WTC11 (cell line): ENCODE measurements at regions of chr11 and their contacts with region 1.

Region 1: GRCh38 chr11:114892381-114893197 is 214.3 kb downstream of the NXPE2 start:
- DNase-seq: peak; percentile 61
- ATAC-seq: peak; percentile 51
- H3K4me3 Mint-ChIP-seq: no peak overlapping the region
- H3K27ac Mint-ChIP-seq: no peak overlapping the region
- H3K4me1 Mint-ChIP-seq: peaks cover 23% of the 10 kb centered on the region
- H3K27me3 Mint-ChIP-seq: peaks cover 3% of the 10 kb centered on the region; the same call in 1 of the 2 replicates
- CTCF ChIP-seq: peak; percentile 84

Region 2: DNA sequence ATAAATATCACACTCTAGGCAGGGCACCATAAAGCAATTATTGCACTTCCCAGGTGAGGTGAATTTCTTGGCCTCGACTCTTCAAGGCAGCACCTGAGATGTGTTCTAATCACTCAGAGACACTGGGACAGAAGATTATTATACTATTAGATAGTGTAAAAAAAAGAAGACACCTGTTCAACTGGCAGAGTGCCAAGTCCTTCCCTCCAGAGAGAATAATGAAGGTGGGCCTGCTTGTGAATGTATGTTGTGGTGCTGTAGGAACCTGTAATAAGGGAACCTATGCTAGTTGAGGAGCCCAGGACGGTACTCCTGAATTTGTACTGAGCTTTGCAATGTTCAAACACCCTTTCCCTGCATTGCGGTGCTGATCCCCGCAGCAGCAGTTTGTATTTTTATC is 106.8 kb before region 1 on chr11:
- CTCF ChIA-PET with region 1: interaction called, 10 read pairs
- POLR2A ChIA-PET with region 1: no interaction called
- DNase-seq: no peak
- ATAC-seq: no peak
- H3K4me3 Mint-ChIP-seq: no peak overlapping the region
- H3K27ac Mint-ChIP-seq: no peak overlapping the region
- H3K4me1 Mint-ChIP-seq: peaks cover 14% of the 10 kb centered on the region
- H3K27me3 Mint-ChIP-seq: no peaks in the 10 kb centered on the region
- CTCF ChIP-seq: no peak

Region 3: GRCh38 chr11:114819028-114819427 is 73.6 kb before region 1 on chr11:
- CTCF ChIA-PET with region 1: interaction called, 10 read pairs
- POLR2A ChIA-PET with region 1: no interaction called
- DNase-seq: no peak
- ATAC-seq: no peak
- H3K4me3 Mint-ChIP-seq: no peak overlapping the region
- H3K27ac Mint-ChIP-seq: no peak overlapping the region
- H3K4me1 Mint-ChIP-seq: peaks cover 21% of the 10 kb centered on the region
- H3K27me3 Mint-ChIP-seq: peaks cover 11% of the 10 kb centered on the region
- CTCF ChIP-seq: no peak

Region 4: GRCh38 chr11:114832532-114833125 is 60.0 kb before region 1 on chr11:
- CTCF ChIA-PET with region 1: interaction called, 13 read pairs
- POLR2A ChIA-PET with region 1: no interaction called
- DNase-seq: no peak
- ATAC-seq: peak; percentile 66
- H3K4me3 Mint-ChIP-seq: peak overlapping the region; percentile 9; the same call in 1 of the 2 replicates
- H3K27ac Mint-ChIP-seq: peak overlapping the region; percentile 32; the same call in 1 of the 2 replicates
- H3K4me1 Mint-ChIP-seq: peaks cover 8% of the 10 kb centered on the region
- H3K27me3 Mint-ChIP-seq: peaks cover 29% of the 10 kb centered on the region
- CTCF ChIP-seq: no peak

Region 5: GRCh38 chr11:114909866-114910265 is 17.3 kb after region 1 on chr11:
- CTCF ChIA-PET with region 1: interaction called, 22 read pairs
- POLR2A ChIA-PET with region 1: no interaction called
- DNase-seq: peak; percentile 15
- ATAC-seq: peak; percentile 83
- H3K4me3 Mint-ChIP-seq: no peak overlapping the region
- H3K27ac Mint-ChIP-seq: no peak overlapping the region
- H3K4me1 Mint-ChIP-seq: no peaks in the 10 kb centered on the region
- H3K27me3 Mint-ChIP-seq: peaks cover 6% of the 10 kb centered on the region
- CTCF ChIP-seq: peak; percentile 28; the same call in 1 of the 2 replicates

Region 6: DNA sequence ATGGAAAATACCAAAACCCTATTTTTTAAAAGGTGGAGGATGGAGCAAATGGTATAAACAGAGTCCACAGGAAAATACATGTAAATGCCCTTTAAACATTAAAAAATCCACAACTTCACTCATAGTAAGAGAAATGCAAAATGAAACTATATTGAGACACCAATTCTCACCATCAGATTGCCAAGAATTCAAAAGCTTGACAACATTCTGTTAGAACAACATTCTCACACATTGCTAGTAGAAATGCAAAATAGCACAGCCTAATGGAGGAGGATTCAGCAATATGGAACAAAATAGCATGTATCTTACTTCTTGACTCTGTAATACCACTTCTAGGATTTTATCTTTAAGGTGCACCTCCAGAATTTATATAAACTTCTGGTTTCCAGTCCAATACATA is 137.6 kb after region 1 on chr11:
- CTCF ChIA-PET with region 1: no interaction called
- POLR2A ChIA-PET with region 1: no interaction called
- DNase-seq: no peak
- ATAC-seq: no peak
- H3K4me3 Mint-ChIP-seq: no peak overlapping the region
- H3K27ac Mint-ChIP-seq: no peak overlapping the region
- H3K4me1 Mint-ChIP-seq: peaks cover 3% of the 10 kb centered on the region; the same call in 1 of the 2 replicates
- H3K27me3 Mint-ChIP-seq: no peaks in the 10 kb centered on the region; the same call in 1 of the 2 replicates
- CTCF ChIP-seq: no peak

Region 7: GRCh38 chr11:115180272-115180671 is 287.7 kb after region 1 on chr11:
- CTCF ChIA-PET with region 1: no interaction called
- POLR2A ChIA-PET with region 1: no interaction called
- DNase-seq: no peak
- ATAC-seq: no peak
- H3K4me3 Mint-ChIP-seq: no peak overlapping the region
- H3K27ac Mint-ChIP-seq: no peak overlapping the region
- H3K4me1 Mint-ChIP-seq: peaks cover 37% of the 10 kb centered on the region
- H3K27me3 Mint-ChIP-seq: no peaks in the 10 kb centered on the region
- CTCF ChIP-seq: no peak